ENCODE measurements at regions of chr12 and their contacts with region 1.

Region 1: GRCh38 chr12:52213512-52214420 is 19.3 kb upstream of the KRT7 start:
- DNase-seq: peak; percentile 85 to 93
- ATAC-seq: peak; percentile 83
- H3K4me3 ChIP-seq: no peak overlapping the region
- H3K27ac ChIP-seq: no peak overlapping the region
- H3K4me1 ChIP-seq: peaks cover 0 to 4% of the 10 kb centered on the region in 2 donors
- H3K27me3 ChIP-seq: no peaks in the 10 kb centered on the region

Region 2: GRCh38 chr12:52321418-52321817 is 107.7 kb after region 1 on chr12:
- intact Hi-C with region 1: loop called (anchors 5 kb)
- DNase-seq: peak in 1 of 2 donors; percentile 68
- ATAC-seq: no peak
- H3K4me3 ChIP-seq: no peak overlapping the region
- H3K27ac ChIP-seq: no peak overlapping the region
- H3K4me1 ChIP-seq: no peaks in the 10 kb centered on the region
- H3K27me3 ChIP-seq: no peaks in the 10 kb centered on the region

Region 3: DNA sequence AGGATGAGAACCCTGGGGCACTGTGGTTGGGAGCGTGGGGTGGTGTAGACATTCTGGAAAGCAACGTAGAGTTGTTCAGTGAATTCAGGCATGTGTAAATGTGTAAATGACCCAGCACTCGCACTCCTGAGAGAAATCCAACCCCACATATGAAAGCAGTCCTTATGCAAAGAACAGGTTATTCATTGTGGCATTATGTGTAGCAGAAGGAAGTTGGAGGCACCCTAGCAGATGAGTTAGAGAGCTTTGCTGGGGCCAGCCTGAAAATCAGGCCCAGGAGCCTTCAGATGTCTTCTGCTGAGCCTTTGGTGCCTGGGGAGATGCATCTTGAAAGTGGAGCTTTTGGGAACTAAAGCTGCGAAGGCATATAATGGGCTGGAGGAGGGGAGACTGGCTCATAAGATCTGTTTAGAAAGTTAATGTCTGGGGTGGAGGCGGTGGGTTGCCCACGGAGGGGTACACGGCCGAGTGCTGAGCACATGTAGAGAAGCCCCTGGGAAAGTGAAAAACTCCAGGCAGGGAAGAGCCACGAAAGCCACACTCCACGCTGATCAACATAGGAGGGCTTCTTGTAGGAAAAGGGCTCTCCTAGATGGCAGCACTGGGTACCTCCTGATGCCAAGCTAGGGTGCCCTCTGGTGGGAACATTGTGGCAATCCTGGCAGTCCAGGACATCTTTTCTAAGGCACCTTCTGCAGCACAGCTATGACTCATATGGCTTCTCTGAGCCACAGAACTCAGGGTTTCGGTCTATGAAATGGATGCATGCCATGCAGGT is 113.5 kb after region 1 on chr12:
- intact Hi-C with region 1: loop called (anchors 5 kb)
- DNase-seq: peak; percentile 86 to 88
- ATAC-seq: peak; percentile 81
- H3K4me3 ChIP-seq: no peak overlapping the region
- H3K27ac ChIP-seq: peak overlapping the region in 1 of 2 donors; percentile 27
- H3K4me1 ChIP-seq: no peaks in the 10 kb centered on the region
- H3K27me3 ChIP-seq: no peaks in the 10 kb centered on the region